ENCODE measurements at regions of chr19 and their contacts with region 1.

Region 1: GRCh38 chr19:10424011-10424637 is 3.8 kb downstream of the PDE4A start:
- DNase-seq: peak; percentile 93
- H3K4me3 ChIP-seq: peak overlapping the region; percentile 46
- H3K27ac ChIP-seq: no peak overlapping the region
- H3K4me1 ChIP-seq: peaks cover 26% of the 10 kb centered on the region
- H3K27me3 ChIP-seq: no peaks in the 10 kb centered on the region
- CTCF ChIP-seq: peak; percentile 95

Region 2: DNA sequence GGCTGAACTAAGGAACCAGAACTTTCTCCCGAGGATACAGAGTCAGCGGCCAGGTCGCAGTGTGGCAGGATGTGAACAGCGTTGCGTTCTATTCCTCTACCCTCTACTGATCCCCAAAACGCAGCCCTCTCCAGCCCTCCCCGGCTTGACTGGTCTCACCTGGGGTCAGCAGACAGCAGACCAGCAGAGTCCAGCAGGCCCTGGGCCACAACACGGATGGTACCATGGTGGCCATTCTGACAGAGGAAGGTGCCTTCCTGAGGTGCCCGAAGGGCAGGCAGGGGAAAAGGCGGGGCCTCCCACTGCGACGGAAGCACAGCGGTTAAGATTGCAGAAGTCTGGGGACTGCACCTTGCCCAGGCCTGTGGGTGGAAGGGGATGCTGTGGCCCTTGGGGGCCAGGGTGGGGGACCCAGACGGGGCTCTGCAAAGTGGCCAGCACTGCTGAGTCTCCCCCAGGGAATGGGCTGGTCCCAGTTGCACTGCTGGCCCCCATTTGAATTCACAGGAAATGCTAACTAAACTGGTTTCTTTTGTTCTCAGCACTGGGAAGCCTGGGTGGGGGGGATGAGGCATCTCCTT is 84.7 kb before region 1 on chr19 and contains the start of gene ICAM3:
- CTCF ChIA-PET with region 1: interaction called, 23 read pairs
- POLR2A ChIA-PET with region 1: no interaction called
- intact Hi-C with region 1: no loop called
- DNase-seq: no peak
- H3K4me3 ChIP-seq: no peak within 1 kb of the TSS
- H3K27ac ChIP-seq: no peak within 1 kb of the TSS
- H3K4me1 ChIP-seq: peaks cover 17% of the 10 kb centered on the region
- H3K27me3 ChIP-seq: no peaks in the 10 kb centered on the region
- CTCF ChIP-seq: no peak
- total RNA-seq, gene ICAM3: 2.6 and 3.2 TPM in 2 replicates

Region 3: GRCh38 chr19:10403137-10404021 is 20.7 kb before region 1 on chr19 and contains the start of gene CDC37:
- CTCF ChIA-PET with region 1: interaction called, 11 read pairs
- POLR2A ChIA-PET with region 1: no interaction called
- intact Hi-C with region 1: loop called (anchors 2 kb)
- DNase-seq: peak; percentile 98
- H3K4me3 ChIP-seq: peak within 1 kb of the TSS; percentile 72
- H3K27ac ChIP-seq: peak within 1 kb of the TSS; percentile 89
- H3K4me1 ChIP-seq: peaks cover 18% of the 10 kb centered on the region
- H3K27me3 ChIP-seq: no peaks in the 10 kb centered on the region
- CTCF ChIP-seq: no peak
- total RNA-seq, gene CDC37: 272 and 288 TPM in 2 replicates

Region 4: GRCh38 chr19:10461047-10461790 is 37.1 kb after region 1 on chr19:
- CTCF ChIA-PET with region 1: interaction called, 11 read pairs
- POLR2A ChIA-PET with region 1: no interaction called
- intact Hi-C with region 1: no loop called
- DNase-seq: peak; percentile 65
- H3K4me3 ChIP-seq: no peak overlapping the region
- H3K27ac ChIP-seq: no peak overlapping the region
- H3K4me1 ChIP-seq: no peaks in the 10 kb centered on the region
- H3K27me3 ChIP-seq: no peaks in the 10 kb centered on the region
- CTCF ChIP-seq: no peak

Region 5: DNA sequence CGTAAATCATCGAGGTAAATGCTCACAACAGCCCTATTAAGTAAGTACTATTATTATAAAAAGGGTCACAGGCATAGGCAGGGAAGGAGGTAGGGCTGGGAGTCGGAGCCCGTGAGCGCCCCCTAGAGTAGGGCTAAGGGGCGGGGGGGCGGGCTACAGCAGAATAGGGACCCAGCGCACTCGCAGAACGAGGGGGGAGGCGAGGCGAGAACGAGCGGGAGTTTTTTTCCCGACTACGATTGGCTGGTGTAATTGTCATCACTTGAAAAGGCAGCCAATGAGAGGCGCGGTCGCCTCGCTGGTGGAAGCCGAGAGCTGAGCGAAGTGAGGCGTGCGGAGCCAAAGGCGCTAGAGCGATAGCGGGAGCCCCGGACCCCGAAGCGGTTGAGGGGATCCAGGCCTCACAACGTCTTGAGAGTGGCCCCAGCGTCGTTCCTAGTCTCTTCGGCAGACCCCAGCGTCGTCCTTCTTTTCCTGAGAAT is 54.8 kb after region 1 on chr19:
- CTCF ChIA-PET with region 1: no interaction called
- POLR2A ChIA-PET with region 1: no interaction called
- intact Hi-C with region 1: no loop called
- DNase-seq: peak; percentile 96
- H3K4me3 ChIP-seq: no peak overlapping the region
- H3K27ac ChIP-seq: no peak overlapping the region
- H3K4me1 ChIP-seq: peaks cover 11% of the 10 kb centered on the region
- H3K27me3 ChIP-seq: no peaks in the 10 kb centered on the region
- CTCF ChIP-seq: peak; percentile 67

Region 6: DNA sequence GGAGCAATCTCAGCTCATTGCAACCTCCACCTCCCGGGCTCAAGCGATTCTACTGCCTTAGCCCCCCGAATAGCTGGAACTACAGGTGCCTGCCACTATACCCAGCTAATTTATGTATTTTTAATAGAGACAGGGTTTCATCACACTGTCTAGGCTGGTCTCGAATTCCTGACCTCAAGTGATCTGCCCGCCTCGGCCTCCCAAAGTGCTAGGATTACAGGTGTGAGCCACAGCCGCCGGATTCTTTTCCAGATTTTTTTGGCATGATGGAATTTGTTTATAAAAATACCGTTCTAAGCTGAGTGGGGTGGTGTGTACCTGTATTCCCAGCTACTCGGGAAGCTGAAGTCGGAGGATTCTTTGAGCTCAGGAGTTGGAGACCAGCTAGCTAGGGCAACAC is 113.5 kb after region 1 on chr19:
- CTCF ChIA-PET with region 1: no interaction called
- POLR2A ChIA-PET with region 1: interaction called, 10 read pairs
- intact Hi-C with region 1: no loop called
- DNase-seq: no peak
- H3K4me3 ChIP-seq: no peak overlapping the region
- H3K27ac ChIP-seq: no peak overlapping the region
- H3K4me1 ChIP-seq: no peaks in the 10 kb centered on the region
- H3K27me3 ChIP-seq: no peaks in the 10 kb centered on the region
- CTCF ChIP-seq: no peak

Region 7: GRCh38 chr19:10551698-10552301 is 127.7 kb after region 1 on chr19:
- CTCF ChIA-PET with region 1: interaction called, 11 read pairs
- POLR2A ChIA-PET with region 1: no interaction called
- intact Hi-C with region 1: no loop called
- DNase-seq: peak; percentile 61
- H3K4me3 ChIP-seq: no peak overlapping the region
- H3K27ac ChIP-seq: no peak overlapping the region
- H3K4me1 ChIP-seq: no peaks in the 10 kb centered on the region
- H3K27me3 ChIP-seq: no peaks in the 10 kb centered on the region
- CTCF ChIP-seq: no peak